ENCODE measurements at regions of chr2 and their contacts with region 1.

Region 1: DNA sequence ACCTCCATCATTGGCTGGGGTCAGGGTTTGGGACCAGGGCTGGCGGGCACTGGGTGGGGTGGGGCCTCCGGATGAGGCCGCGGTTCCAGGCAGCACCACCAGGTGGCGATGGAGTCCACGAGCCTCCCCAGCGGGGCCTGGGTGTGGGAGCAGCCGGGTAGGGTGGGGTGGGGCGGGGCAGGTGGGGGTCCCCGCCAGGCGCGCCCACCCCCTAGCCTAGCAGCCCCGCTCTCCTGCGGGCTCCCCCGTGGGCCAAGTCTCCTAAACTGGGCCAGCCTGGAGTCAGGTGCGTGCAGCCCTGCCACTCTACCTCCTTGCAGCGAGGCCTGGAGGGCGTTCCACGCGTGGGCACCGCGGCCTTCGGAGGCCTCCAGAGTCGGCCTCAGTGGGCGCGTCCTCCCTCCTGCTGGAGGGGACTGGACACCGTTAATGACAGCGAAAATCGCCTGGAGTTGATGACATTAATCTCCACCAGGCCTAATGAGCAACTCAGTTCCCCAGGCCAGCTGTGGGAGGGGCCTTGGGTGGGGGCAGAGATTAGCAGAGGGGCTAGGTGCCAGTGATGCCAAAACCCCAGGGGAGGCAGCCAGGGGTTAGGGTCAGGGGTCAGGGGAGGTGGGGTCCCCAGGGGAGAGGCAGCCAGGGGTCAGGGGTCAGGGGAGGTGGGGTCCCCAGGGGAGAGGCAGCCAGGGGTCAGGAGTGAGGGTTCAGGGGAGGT is 187.6 kb downstream of the TWIST2 start:
- DNase-seq: no peak
- H3K4me3 ChIP-seq: no peak overlapping the region
- CTCF ChIP-seq: no peak
- POLR2A ChIP-seq: no peak

Region 2: GRCh38 chr2:239882331-239882732 is 846.8 kb after region 1 on chr2:
- intact Hi-C with region 1: loop called (anchors 10 kb)
- DNase-seq: peak; percentile 46 to 89
- H3K4me3 ChIP-seq: no peak overlapping the region
- CTCF ChIP-seq: no peak
- POLR2A ChIP-seq: no peak

Region 3: GRCh38 chr2:239991689-239992314 is 956.3 kb after region 1 on chr2:
- intact Hi-C with region 1: loop called (anchors 10 kb)
- DNase-seq: no peak
- H3K4me3 ChIP-seq: no peak overlapping the region
- CTCF ChIP-seq: no peak
- POLR2A ChIP-seq: no peak

Region 4: DNA sequence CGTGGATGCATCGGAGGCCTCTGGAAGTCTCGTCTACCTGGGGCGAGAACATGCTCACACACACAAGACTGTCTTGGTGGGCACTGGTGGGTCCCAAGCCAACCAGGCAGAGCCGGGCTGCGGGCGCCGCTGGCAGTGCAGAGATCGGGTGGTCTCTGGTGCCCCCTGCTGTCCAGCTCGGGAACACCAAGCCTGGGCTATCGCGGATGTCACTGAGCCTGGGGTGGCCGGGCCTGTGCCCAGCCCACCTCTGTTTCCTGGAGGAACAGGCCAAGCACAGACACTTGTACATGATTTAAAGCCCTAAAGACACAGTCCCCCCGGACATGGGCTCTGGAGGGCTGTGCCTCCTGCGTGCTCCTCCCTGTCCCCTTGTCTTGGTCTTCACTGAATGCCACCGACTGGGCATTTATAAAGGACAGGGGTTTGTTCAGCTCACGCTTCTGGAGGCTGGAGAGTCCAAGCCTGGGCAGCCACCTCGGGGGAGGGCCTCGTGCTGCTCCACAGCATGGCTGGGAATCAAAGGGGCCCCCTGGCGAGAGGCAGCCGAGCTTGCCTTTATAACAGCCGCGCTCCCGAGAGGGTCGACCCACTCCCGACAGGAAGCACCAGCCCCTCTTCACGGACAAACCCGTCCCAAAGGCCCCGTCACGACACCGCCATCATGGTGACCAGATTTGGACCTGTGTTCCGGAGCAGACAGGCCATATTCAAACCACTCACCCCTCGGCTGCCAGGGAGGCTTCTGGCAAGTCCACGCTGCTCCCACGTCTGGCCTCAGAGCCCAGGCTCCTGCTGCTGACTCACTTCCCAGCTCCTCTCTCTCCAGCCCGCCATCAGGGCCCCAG is 1108.5 kb after region 1 on chr2:
- intact Hi-C with region 1: loop called (anchors 10 kb)
- DNase-seq: peak; percentile 45 to 94
- H3K4me3 ChIP-seq: no peak overlapping the region
- CTCF ChIP-seq: peak in 1 of 3 donors; percentile 86
- POLR2A ChIP-seq: no peak

Measured in lower leg skin (tissue), 4 donors.